GM12878 (cell line): ENCODE measurements at regions of chr11 and their contacts with region 1.

Region 1: GRCh38 chr11:115153135-115153534 is 351.1 kb downstream of the CADM1 start:
- DNase-seq: no peak
- ATAC-seq: no peak
- H3K4me3 ChIP-seq: no peak overlapping the region
- H3K27ac ChIP-seq: no peak overlapping the region
- H3K4me1 ChIP-seq: no peaks in the 10 kb centered on the region
- H3K27me3 ChIP-seq: peaks cover 0 to 2% of the 10 kb centered on the region in 2 experiments; a peak in 1 of 4 replicates
- CTCF ChIP-seq: no peak
- EP300 ChIP-seq: no peak
- POLR2A ChIP-seq: no peak
- RAD21 ChIP-seq: no peak

Region 2: DNA sequence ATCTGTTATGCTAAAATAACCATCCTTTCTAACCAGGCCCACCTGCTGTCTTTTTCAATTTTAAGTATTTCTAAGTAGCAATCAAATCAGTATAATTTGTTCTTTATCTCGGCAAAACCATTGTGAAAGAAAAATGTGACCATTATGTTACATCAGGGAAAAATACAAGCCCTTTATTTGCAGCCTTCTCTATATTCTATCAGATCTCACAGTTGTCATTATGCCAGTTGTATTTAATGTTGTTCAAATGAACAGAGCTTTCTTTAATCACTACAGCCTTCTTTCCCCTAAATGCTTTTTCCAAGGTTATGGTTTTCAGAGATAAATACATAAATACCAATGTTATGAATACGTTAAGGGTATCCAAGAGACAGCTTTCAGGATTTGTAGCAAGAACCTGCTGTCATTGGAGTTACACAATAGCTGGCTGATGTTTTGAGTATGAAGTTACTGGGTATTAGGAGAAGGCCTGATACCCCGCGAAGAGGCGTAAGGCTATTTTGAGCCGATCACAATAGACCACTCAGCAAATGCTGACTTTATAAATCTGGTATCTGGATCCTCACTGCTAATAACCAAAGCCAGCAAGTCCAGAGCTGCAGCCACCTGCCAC is 55.2 kb before region 1 on chr11:
- CTCF ChIA-PET with region 1: no interaction called
- POLR2A ChIA-PET with region 1: no interaction called
- RAD21 ChIA-PET with region 1: no interaction called
- SMC1A ChIA-PET with region 1: no interaction called
- in situ Hi-C with region 1: loop called (anchors 10 kb)
- intact Hi-C with region 1: no loop called
- DNase-seq: no peak
- ATAC-seq: no peak
- H3K4me3 ChIP-seq: no peak overlapping the region
- H3K27ac ChIP-seq: no peak overlapping the region
- H3K4me1 ChIP-seq: no peaks in the 10 kb centered on the region
- H3K27me3 ChIP-seq: peaks cover 0 to 2% of the 10 kb centered on the region in 2 experiments; a peak in 2 of 4 replicates
- CTCF ChIP-seq: no peak
- EP300 ChIP-seq: no peak
- POLR2A ChIP-seq: no peak
- RAD21 ChIP-seq: no peak